ENCODE measurements at regions of chr1 and their contacts with region 1.

Region 1: DNA sequence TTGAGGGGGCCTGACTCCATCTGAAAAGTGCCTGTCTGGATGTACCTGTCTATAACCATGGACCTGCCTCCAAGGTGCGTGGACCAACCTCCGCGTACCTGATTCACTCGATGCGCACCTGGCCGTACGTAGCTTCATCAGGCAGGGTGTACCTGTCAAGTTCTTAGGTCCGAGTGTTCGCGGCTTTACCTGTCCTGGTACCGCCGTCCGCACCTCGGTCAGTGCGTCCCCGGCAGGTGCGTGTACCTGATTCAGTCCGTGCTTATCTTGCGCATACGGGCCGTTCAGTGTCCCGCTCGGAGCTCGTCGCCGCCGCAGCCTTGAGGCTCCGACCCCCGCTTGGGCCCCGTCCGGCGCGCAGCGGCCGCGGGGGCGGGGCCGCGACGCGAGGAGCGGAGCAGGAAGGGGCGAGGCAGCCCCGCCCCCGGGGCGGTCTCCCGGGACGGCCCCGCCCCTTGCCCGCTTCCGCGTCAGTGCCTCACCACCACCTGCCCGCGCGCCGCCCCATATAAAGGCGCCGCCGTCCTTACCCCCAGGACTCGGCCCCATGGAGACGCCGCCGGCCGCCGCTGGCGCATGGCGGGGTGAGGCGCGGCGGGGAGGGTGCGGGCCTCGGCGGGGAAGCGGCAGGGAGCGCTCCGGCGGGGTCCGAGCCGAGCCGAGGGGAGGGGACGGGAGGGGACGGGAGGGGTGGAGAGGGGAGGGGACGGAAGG is at the start of gene ZC3H12A:
- DNase-seq: peak; percentile 89 to 94 (median 93)
- H3K4me3 ChIP-seq: peak within 1 kb of the TSS; percentile 85 to 96
- H3K4me3 Mint-ChIP-seq: peak within 1 kb of the TSS; percentile 95 to 99 (median 97)
- H3K27ac ChIP-seq: peak within 1 kb of the TSS; percentile 96
- H3K27ac Mint-ChIP-seq: peak within 1 kb of the TSS; percentile 97 to 100 (median 99)
- H3K4me1 ChIP-seq: peaks cover 37% of the 10 kb centered on the region
- H3K4me1 Mint-ChIP-seq: peaks cover 33 to 65% (median 43%) of the 10 kb centered on the region in 4 donors
- H3K27me3 ChIP-seq: no peaks in the 10 kb centered on the region
- H3K27me3 Mint-ChIP-seq: peaks cover 0 to 2% of the 10 kb centered on the region in 2 donors
- total RNA-seq, gene ZC3H12A: 54.6 to 60.7 TPM

Region 2: GRCh38 chr1:37458528-37458927 is 15.7 kb before region 1 on chr1:
- CTCF ChIA-PET with region 1: interaction called, 101 read pairs
- POLR2A ChIA-PET with region 1: interaction called, 102 read pairs
- intact Hi-C with region 1: loop called (anchors 2 kb)
- DNase-seq: peak in 1 of 5 donors; percentile 6
- H3K4me3 ChIP-seq: no peak overlapping the region
- H3K4me3 Mint-ChIP-seq: no peak overlapping the region
- H3K27ac ChIP-seq: no peak overlapping the region
- H3K27ac Mint-ChIP-seq: peak overlapping the region in 1 of 7 donors; percentile 47
- H3K4me1 ChIP-seq: no peaks in the 10 kb centered on the region
- H3K4me1 Mint-ChIP-seq: peaks cover 5 to 9% (median 6%) of the 10 kb centered on the region in 4 donors
- H3K27me3 ChIP-seq: no peaks in the 10 kb centered on the region
- H3K27me3 Mint-ChIP-seq: no peaks in the 10 kb centered on the region

Region 3: GRCh38 chr1:37595440-37596319 is 121.5 kb after region 1 on chr1 and contains the start of gene GNL2:
- CTCF ChIA-PET with region 1: no interaction called
- POLR2A ChIA-PET with region 1: interaction called, 4 read pairs
- intact Hi-C with region 1: loop called (anchors 2 kb)
- DNase-seq: peak; percentile 95
- H3K4me3 ChIP-seq: peak within 1 kb of the TSS; percentile 74 to 86
- H3K4me3 Mint-ChIP-seq: peak within 1 kb of the TSS; percentile 98 to 99 (median 99)
- H3K27ac ChIP-seq: peak within 1 kb of the TSS; percentile 89
- H3K27ac Mint-ChIP-seq: peak within 1 kb of the TSS; percentile 99 to 100 (median 99)
- H3K4me1 ChIP-seq: peaks cover 17% of the 10 kb centered on the region
- H3K4me1 Mint-ChIP-seq: peaks cover 18 to 36% (median 26%) of the 10 kb centered on the region in 4 donors
- H3K27me3 ChIP-seq: no peaks in the 10 kb centered on the region
- H3K27me3 Mint-ChIP-seq: no peaks in the 10 kb centered on the region
- total RNA-seq, gene GNL2: 33.9 to 37.1 TPM

Region 4: DNA sequence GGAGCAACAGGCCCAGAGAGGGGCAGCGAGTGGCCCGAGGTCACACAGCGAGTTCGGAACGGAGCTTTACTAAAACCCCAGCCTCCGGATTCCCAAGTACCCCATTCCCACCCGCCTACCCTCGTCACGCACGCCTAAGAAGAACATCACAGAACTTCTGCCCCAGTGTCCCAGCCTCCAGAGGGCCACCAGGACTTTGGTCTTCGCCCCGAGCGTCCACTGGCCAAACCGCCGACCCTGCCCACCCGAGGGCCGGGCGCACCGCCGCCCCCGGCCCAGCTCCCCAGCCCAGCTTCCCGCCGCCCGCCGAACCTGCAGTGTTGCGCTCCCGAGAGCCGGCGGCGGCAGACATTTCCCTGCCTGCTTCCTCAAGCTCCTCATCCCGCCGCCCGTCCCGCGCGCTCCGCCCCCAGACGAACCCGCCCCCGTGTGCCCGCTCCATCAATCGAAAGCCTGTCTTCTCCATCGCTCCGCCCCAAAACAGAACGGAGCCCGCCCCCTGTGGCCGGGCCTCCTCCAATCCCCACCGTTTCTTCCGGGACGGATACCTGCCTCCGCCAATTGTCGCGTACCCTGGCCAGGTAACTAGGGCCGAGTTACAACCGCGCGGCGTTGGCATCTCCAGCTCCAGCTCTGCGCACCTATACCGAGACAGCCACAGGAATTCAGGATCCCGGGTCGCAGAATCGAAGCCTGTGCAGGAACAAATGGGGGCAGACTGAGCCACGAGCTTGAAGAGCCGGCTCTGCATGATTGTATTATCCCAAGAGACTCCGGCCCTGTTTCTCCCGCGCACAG is 457.4 kb after region 1 on chr1:
- CTCF ChIA-PET with region 1: no interaction called
- POLR2A ChIA-PET with region 1: no interaction called
- intact Hi-C with region 1: loop called (anchors 1 kb)
- DNase-seq: peak; percentile 95 to 97 (median 97)
- H3K4me3 ChIP-seq: peak overlapping the region; percentile 58 to 71
- H3K4me3 Mint-ChIP-seq: peak overlapping the region; percentile 93 to 99 (median 96)
- H3K27ac ChIP-seq: peak overlapping the region; percentile 70
- H3K27ac Mint-ChIP-seq: peak overlapping the region; percentile 69 to 95 (median 91)
- H3K4me1 ChIP-seq: peaks cover 34% of the 10 kb centered on the region
- H3K4me1 Mint-ChIP-seq: peaks cover 21 to 45% (median 32%) of the 10 kb centered on the region in 4 donors
- H3K27me3 ChIP-seq: no peaks in the 10 kb centered on the region
- H3K27me3 Mint-ChIP-seq: no peaks in the 10 kb centered on the region